Esophagus squamous epithelium (tissue), 5 donors: ENCODE measurements at regions of chr2 and their contacts with region 1.

Region 1: GRCh38 chr2:231612179-231613053 is 19.8 kb downstream of the TEX44 start:
- DNase-seq: peak; percentile 68
- H3K4me3 ChIP-seq: peak overlapping the region in 1 of 4 donors; percentile 70
- H3K27ac ChIP-seq: peak overlapping the region; percentile 90 to 98 (median 94)
- H3K4me1 ChIP-seq: peaks cover 42 to 65% (median 43%) of the 10 kb centered on the region in 3 donors
- H3K27me3 ChIP-seq: no peaks in the 10 kb centered on the region
- CTCF ChIP-seq: peak; percentile 94 to 99 (median 98)
- POLR2A ChIP-seq: peak in 1 of 4 donors; percentile 11

Region 2: GRCh38 chr2:231557571-231558237 is 54.7 kb before region 1 on chr2:
- intact Hi-C with region 1: no loop called
- DNase-seq: peak; percentile 14
- H3K4me3 ChIP-seq: no peak overlapping the region
- H3K27ac ChIP-seq: peak overlapping the region in 3 of 4 donors; percentile 21 to 64 (median 57)
- H3K4me1 ChIP-seq: peaks cover 6 to 25% (median 14%) of the 10 kb centered on the region in 3 donors
- H3K27me3 ChIP-seq: no peaks in the 10 kb centered on the region
- CTCF ChIP-seq: peak; percentile 30 to 82 (median 47)
- POLR2A ChIP-seq: no peak

Region 3: GRCh38 chr2:231709981-231710798 is 97.8 kb after region 1 on chr2:
- intact Hi-C with region 1: loop called (anchors 2 kb)
- DNase-seq: no peak
- H3K4me3 ChIP-seq: peak overlapping the region; percentile 59 to 95 (median 92)
- H3K27ac ChIP-seq: peak overlapping the region; percentile 94 to 100 (median 99)
- H3K4me1 ChIP-seq: peaks cover 39 to 70% (median 41%) of the 10 kb centered on the region in 3 donors
- H3K27me3 ChIP-seq: no peaks in the 10 kb centered on the region
- CTCF ChIP-seq: peak; percentile 52 to 100 (median 98)
- POLR2A ChIP-seq: peak in 3 of 4 donors; percentile 12 to 89 (median 87)

Region 4: GRCh38 chr2:231745303-231746038 is 133.1 kb after region 1 on chr2:
- intact Hi-C with region 1: no loop called
- DNase-seq: no peak
- H3K4me3 ChIP-seq: no peak overlapping the region
- H3K27ac ChIP-seq: no peak overlapping the region
- H3K4me1 ChIP-seq: no peaks in the 10 kb centered on the region
- H3K27me3 ChIP-seq: no peaks in the 10 kb centered on the region
- CTCF ChIP-seq: no peak
- POLR2A ChIP-seq: no peak